ENCODE measurements at regions of chr6 and their contacts with region 1.

Region 1: GRCh38 chr6:47477497-47478232 is at the start of gene CD2AP:
- DNase-seq: peak; percentile 83 to 94
- H3K4me3 ChIP-seq: peak within 1 kb of the TSS; percentile 69 to 91 (median 82)
- H3K27ac ChIP-seq: peak within 1 kb of the TSS; percentile 90
- H3K4me1 ChIP-seq: peaks cover 0 to 5% (median 1%) of the 10 kb centered on the region in 4 experiments; a peak in 2 of 7 replicates
- H3K27me3 ChIP-seq: no peaks in the 10 kb centered on the region
- CTCF ChIP-seq: no peak
- EP300 ChIP-seq: peak in 1 of 2 experiments; percentile 15; a peak in 1 of 3 replicates
- POLR2A ChIP-seq: peak; percentile 89 to 94
- RAD21 ChIP-seq: peak in 1 of 2 experiments; percentile 5; a peak in 1 of 4 replicates
- total RNA-seq, gene CD2AP: 69.7 and 75.6 TPM in 2 replicates

Region 2: DNA sequence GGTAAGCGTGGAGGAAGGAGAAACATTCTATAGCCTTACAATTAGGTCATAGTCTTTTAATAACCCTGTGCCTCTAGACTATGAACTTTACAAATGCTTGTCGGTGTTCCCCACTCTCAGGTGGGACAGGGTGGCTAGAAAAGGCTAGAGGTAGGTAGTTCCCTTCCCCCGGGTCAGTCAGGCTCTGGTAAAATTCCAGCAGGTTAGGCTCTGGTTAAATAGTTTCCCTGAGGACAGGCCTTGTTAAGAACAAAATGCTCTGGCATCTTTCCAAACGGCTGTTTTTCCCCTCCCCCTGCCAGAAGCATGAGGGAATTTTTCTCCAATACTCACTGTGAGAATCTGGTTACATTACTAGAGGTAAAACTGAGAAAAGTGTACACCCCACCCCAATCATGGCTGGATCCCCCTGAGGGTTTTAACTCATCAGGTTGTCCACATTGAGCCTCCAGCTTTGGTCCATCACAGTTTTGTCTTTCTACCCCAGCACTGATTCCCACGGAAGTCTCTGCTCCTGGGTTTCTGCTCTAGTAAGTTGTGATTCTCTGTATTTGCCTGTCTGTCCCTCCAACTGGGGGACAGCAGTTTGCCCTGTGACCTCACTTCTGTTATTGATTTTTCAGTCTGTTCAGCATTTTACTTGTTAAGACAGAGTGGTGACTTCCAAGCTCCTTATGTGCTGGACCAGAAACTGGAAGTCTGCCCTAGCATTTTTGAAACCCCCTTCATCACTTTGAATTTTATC is 350.8 kb before region 1 on chr6:
- CTCF ChIA-PET with region 1: no interaction called
- POLR2A ChIA-PET with region 1: no interaction called
- DNase-seq: no peak
- H3K4me3 ChIP-seq: no peak overlapping the region; a peak in 1 of 8 replicates
- H3K27ac ChIP-seq: no peak overlapping the region
- H3K4me1 ChIP-seq: peaks cover 0 to 13% (median 6%) of the 10 kb centered on the region in 4 experiments; a peak in 4 of 7 replicates
- H3K27me3 ChIP-seq: no peaks in the 10 kb centered on the region
- CTCF ChIP-seq: no peak
- EP300 ChIP-seq: no peak
- POLR2A ChIP-seq: no peak
- RAD21 ChIP-seq: no peak

Region 3: DNA sequence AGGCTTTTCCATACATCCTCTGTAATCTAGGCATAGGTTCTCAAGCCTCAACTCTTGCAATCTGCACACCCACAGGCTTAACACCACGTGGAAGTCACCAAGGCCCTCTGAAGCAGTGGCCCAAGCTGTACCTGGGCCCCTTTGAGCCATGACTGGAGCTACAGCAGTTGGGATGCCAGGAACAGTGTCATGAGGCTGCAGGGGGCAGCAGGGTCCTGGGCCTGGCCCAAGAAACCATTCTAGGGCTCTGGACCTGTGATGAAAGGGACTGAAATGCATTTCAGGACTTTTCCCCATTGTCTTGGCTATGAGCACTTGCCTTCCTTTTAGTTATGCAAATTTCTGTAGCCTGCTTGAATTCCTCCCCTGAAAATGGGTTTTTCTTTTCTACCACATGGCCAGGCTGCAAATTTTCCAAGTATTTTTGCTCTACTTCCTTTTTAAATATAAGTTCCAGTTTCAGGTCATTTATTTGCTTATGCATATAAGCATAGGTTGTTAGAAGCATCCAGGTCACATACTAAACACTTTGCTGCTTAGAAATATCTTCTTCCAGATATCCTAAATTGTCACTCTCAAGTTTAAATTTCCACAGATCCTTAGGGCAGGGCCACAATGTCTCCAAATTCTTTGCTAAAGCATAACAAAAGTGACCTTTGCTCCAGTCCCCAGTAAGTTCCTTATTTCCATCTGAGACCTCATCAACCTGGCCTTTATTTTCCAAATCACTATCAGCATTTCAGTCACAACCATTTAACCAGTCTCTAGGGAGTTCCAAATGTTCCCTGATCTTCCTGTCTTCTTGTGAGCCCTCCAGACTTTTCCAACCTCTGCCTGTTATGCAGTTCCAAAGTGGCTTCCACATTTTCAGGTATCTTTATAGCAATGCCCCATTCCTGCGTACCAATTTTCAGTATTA is 48.7 kb before region 1 on chr6:
- CTCF ChIA-PET with region 1: no interaction called
- POLR2A ChIA-PET with region 1: interaction called, 19 read pairs
- DNase-seq: peak; percentile 61 to 77
- H3K4me3 ChIP-seq: peak overlapping the region in 1 of 4 experiments; percentile 17; a peak in 1 of 8 replicates
- H3K27ac ChIP-seq: peak overlapping the region; percentile 46; the same call in 1 of the 2 replicates
- H3K4me1 ChIP-seq: peaks cover 0 to 6% (median 3%) of the 10 kb centered on the region in 4 experiments; a peak in 3 of 7 replicates
- H3K27me3 ChIP-seq: no peaks in the 10 kb centered on the region
- CTCF ChIP-seq: peak; percentile 30 to 44 (median 34)
- EP300 ChIP-seq: no peak
- POLR2A ChIP-seq: no peak
- RAD21 ChIP-seq: peak; percentile 63 to 73

Region 4: DNA sequence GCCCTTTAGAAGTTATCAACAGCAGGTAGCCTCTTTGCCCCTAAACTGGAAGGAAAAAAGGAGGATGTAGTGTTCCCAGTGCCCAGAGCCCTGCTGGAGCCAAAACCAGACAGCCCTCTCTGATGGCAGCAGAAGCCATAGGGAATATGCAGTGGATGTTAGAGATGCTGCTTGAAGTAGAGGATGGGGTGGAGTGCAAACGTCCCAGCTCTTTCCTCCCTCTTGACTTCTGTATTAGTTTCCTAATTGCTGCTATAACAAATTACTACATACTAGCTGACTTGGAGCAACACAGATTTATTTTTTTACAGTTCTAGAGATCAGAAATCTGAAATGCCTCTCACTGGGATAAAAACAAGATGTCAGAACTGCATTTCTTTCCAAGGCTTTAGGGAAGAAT is 12.5 kb before region 1 on chr6:
- CTCF ChIA-PET with region 1: interaction called, 3 read pairs
- POLR2A ChIA-PET with region 1: interaction called, 16 read pairs
- DNase-seq: no peak
- H3K4me3 ChIP-seq: no peak overlapping the region
- H3K27ac ChIP-seq: no peak overlapping the region
- H3K4me1 ChIP-seq: no peaks in the 10 kb centered on the region
- H3K27me3 ChIP-seq: no peaks in the 10 kb centered on the region
- CTCF ChIP-seq: no peak
- EP300 ChIP-seq: no peak
- POLR2A ChIP-seq: no peak
- RAD21 ChIP-seq: no peak